Posterior vena cava (tissue), 2 donors: ENCODE measurements at regions of chr4 and their contacts with region 1.

Region 1: GRCh38 chr4:44961001-44961755 is 234.8 kb upstream of the GNPDA2 start:
- DNase-seq: no peak

Region 2: GRCh38 chr4:44678094-44679041 is 282.8 kb before region 1 on chr4 and contains the start of gene GUF1:
- intact Hi-C with region 1: no loop called
- DNase-seq: peak; percentile 97
- total RNA-seq, gene GUF1: 12.9 to 19.5 TPM

Region 3: GRCh38 chr4:44996285-44996845 is 35.2 kb after region 1 on chr4:
- intact Hi-C with region 1: loop called in 1 of 2 experiments (anchors 2 kb)
- DNase-seq: no peak